Activated CD8-positive, alpha-beta memory T cell treated with anti-CD3 and anti-CD28 coated beads, Interleukin-2, amount 10 ng/mL, durations not matched to agents 7 days and 5 days (primary cell): ENCODE measurements at regions of chr19 and their contacts with region 1.

Region 1: GRCh38 chr19:8158411-8159074 is 9.2 kb upstream of the FBN3 start:
- DNase-seq: peak; percentile 66
- ATAC-seq: peak; percentile 85
- H3K4me3 Mint-ChIP-seq: no peak overlapping the region
- H3K27ac Mint-ChIP-seq: no peak overlapping the region
- H3K4me1 Mint-ChIP-seq: peaks cover 9% of the 10 kb centered on the region
- H3K27me3 Mint-ChIP-seq: peaks cover 13% of the 10 kb centered on the region

Region 2: GRCh38 chr19:7953060-7953459 is 205.5 kb before region 1 on chr19:
- CTCF ChIA-PET with region 1: no interaction called
- DNase-seq: no peak
- ATAC-seq: peak; percentile 23
- H3K4me3 Mint-ChIP-seq: no peak overlapping the region
- H3K27ac Mint-ChIP-seq: no peak overlapping the region
- H3K4me1 Mint-ChIP-seq: no peaks in the 10 kb centered on the region
- H3K27me3 Mint-ChIP-seq: no peaks in the 10 kb centered on the region

Region 3: GRCh38 chr19:8129060-8129459 is 29.5 kb before region 1 on chr19:
- CTCF ChIA-PET with region 1: no interaction called
- DNase-seq: no peak
- ATAC-seq: no peak
- H3K4me3 Mint-ChIP-seq: no peak overlapping the region
- H3K27ac Mint-ChIP-seq: no peak overlapping the region
- H3K4me1 Mint-ChIP-seq: no peaks in the 10 kb centered on the region
- H3K27me3 Mint-ChIP-seq: no peaks in the 10 kb centered on the region

Region 4: GRCh38 chr19:8242211-8242821 is 83.8 kb after region 1 on chr19:
- CTCF ChIA-PET with region 1: interaction called, 10 read pairs
- DNase-seq: no peak
- ATAC-seq: no peak
- H3K4me3 Mint-ChIP-seq: no peak overlapping the region
- H3K27ac Mint-ChIP-seq: no peak overlapping the region
- H3K4me1 Mint-ChIP-seq: peaks cover 18% of the 10 kb centered on the region
- H3K27me3 Mint-ChIP-seq: no peaks in the 10 kb centered on the region

Region 5: DNA sequence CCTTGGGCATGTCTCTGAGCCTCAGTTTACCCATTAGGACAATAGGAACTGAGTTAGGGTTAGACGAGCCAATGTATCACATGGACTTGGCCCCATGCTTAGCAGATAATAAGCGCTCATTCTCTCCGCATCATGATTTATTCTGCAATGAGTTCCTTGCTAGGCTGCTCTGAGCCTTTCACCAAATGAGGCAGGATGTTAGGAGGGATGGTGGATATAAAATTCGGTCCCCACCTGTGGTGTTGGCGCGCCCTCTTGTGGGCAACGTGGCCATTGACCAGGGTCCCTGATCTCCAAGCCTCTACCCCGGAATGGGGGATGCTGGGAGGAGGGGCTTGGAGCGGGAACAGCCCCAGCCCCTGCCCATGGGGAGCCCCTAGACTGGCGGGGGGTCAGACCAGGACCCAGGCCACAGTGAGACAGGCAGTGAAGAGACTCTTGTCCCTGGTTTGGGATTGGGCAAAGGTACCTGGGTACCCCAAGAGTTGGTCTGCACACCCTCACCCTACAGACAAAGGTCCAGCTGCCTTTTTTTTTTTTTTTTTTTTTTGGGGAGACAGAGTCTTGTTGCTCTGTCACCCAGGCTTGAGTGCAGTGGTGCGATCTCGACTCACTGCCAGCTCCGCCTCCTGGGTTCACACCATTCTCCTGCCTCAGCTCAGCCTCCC is 94.5 kb after region 1 on chr19:
- CTCF ChIA-PET with region 1: interaction called, 26 read pairs
- DNase-seq: peak; percentile 86
- ATAC-seq: peak; percentile 88
- H3K4me3 Mint-ChIP-seq: no peak overlapping the region
- H3K27ac Mint-ChIP-seq: no peak overlapping the region
- H3K4me1 Mint-ChIP-seq: peaks cover 6% of the 10 kb centered on the region
- H3K27me3 Mint-ChIP-seq: no peaks in the 10 kb centered on the region